B cell (primary cell): ENCODE measurements at regions of chr19 and their contacts with region 1.

Region 1: DNA sequence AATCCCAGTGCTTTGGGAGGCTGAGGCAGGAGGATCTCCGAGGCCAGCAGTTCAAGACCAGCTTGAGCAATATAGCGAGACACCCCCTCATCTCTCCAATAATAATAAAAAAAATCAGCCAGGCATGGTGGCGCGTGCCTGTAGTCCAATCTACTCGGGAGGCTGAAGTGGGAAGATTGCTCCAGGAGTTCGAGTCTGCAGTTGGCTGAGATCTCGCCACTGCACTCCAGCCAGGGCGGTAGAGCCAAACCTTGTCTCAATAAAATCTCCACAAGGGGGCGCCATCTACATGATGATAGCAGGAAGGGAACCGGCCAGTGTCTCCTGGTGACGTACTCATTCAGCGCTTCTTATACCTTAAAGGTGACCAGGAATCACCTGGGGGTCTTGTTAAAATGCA is 13.6 kb upstream of the C5AR1 start:
- DNase-seq: peak; percentile 86
- ATAC-seq: peak; percentile 80
- H3K4me3 ChIP-seq: no peak overlapping the region
- H3K4me3 Mint-ChIP-seq: no peak overlapping the region
- H3K27ac ChIP-seq: no peak overlapping the region
- H3K27ac Mint-ChIP-seq: no peak overlapping the region
- H3K4me1 ChIP-seq: peaks cover 4 to 18% of the 10 kb centered on the region in 2 donors
- H3K4me1 Mint-ChIP-seq: peaks cover 13% of the 10 kb centered on the region
- H3K27me3 ChIP-seq: peaks cover 0 to 6% (median 1%) of the 10 kb centered on the region in 4 experiments
- H3K27me3 Mint-ChIP-seq: no peaks in the 10 kb centered on the region
- CTCF ChIP-seq: peak; percentile 78

Region 2: DNA sequence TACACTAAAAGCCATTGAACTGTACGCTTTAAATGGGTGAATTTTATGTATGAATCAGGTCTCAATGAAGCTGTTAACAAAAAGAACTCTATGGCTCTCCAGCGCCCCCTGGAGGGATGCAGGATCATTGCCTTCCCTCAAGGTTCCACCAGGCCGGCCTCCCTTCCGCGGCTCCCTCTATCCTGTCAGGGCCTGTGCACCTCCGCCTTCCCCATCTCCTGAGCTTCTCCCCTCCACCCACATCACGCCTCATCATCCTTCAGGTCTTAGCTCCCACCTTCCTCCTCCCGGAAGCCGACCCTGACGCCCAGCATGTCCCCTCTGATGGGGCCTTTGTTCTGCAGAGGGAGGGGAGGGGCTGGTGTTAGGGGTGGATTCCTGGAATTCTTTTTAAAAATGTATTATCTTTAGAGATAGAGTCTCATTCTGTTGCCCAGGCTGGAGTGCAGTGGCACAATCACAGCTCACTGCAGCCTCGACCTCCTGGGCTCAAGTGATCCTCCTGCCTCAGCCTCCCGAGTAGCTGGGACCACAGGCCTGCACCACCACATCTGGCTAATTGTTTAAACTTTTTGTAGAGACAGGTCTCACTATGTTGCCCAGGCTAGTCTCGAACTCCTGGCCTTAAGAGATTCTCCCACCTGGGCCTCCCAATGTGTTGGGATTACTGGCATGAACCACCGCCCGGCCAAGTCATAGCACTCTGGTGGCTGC is 95.6 kb after region 1 on chr19:
- CTCF ChIA-PET with region 1: interaction called, 27 read pairs
- POLR2A ChIA-PET with region 1: no interaction called
- intact Hi-C with region 1: no loop called
- DNase-seq: peak; percentile 77
- ATAC-seq: peak; percentile 68
- H3K4me3 ChIP-seq: no peak overlapping the region
- H3K4me3 Mint-ChIP-seq: no peak overlapping the region
- H3K27ac ChIP-seq: no peak overlapping the region
- H3K27ac Mint-ChIP-seq: no peak overlapping the region
- H3K4me1 ChIP-seq: peaks cover 0 to 7% of the 10 kb centered on the region in 2 donors
- H3K4me1 Mint-ChIP-seq: peaks cover 7% of the 10 kb centered on the region
- H3K27me3 ChIP-seq: peaks cover 0 to 3% (median 0%) of the 10 kb centered on the region in 4 experiments
- H3K27me3 Mint-ChIP-seq: peaks cover 33% of the 10 kb centered on the region
- CTCF ChIP-seq: peak; percentile 93

Region 3: DNA sequence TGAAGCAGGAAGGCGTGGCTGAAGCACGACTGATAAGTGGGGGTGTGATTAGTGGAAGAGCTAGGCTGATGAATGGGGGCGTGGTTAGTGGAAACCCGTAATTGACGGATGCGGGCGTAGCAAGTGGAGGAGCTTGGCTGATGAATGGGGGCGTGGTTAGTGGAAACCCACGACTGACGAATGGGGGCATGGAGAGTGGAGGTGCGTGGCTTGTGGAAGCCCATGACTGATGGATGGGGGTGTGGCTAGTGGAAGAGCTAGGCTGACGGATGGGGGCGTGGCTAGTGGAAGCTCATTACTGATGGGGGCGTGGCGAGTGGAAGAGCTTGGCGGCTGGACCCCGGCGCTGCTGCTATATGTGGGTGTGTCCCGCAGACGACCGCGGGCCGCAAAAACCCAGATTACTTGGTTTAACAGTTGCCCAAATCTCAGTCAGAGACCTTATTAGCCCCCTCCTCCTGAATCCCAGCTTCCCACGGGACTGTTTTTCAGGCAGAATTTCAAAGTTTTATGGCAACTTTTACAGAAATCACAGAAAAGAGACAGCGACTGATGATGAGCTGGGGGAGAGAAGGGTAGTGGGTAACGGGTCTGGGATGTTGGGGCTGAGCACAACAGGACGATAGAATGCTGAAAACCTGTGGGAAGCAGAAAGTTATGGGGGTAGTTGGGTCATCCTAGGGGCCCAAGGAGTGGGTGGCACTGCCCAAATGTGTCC is 132.3 kb after region 1 on chr19:
- CTCF ChIA-PET with region 1: interaction called, 4 read pairs
- POLR2A ChIA-PET with region 1: no interaction called
- intact Hi-C with region 1: loop called (anchors 1 kb)
- DNase-seq: peak; percentile 71
- ATAC-seq: peak; percentile 35
- H3K4me3 ChIP-seq: no peak overlapping the region
- H3K4me3 Mint-ChIP-seq: no peak overlapping the region
- H3K27ac ChIP-seq: no peak overlapping the region
- H3K27ac Mint-ChIP-seq: no peak overlapping the region
- H3K4me1 ChIP-seq: peaks cover 22 to 31% of the 10 kb centered on the region in 2 donors
- H3K4me1 Mint-ChIP-seq: peaks cover 11% of the 10 kb centered on the region
- H3K27me3 ChIP-seq: peaks cover 0 to 95% (median 52%) of the 10 kb centered on the region in 4 experiments
- H3K27me3 Mint-ChIP-seq: peaks cover 45% of the 10 kb centered on the region
- CTCF ChIP-seq: no peak

Region 4: DNA sequence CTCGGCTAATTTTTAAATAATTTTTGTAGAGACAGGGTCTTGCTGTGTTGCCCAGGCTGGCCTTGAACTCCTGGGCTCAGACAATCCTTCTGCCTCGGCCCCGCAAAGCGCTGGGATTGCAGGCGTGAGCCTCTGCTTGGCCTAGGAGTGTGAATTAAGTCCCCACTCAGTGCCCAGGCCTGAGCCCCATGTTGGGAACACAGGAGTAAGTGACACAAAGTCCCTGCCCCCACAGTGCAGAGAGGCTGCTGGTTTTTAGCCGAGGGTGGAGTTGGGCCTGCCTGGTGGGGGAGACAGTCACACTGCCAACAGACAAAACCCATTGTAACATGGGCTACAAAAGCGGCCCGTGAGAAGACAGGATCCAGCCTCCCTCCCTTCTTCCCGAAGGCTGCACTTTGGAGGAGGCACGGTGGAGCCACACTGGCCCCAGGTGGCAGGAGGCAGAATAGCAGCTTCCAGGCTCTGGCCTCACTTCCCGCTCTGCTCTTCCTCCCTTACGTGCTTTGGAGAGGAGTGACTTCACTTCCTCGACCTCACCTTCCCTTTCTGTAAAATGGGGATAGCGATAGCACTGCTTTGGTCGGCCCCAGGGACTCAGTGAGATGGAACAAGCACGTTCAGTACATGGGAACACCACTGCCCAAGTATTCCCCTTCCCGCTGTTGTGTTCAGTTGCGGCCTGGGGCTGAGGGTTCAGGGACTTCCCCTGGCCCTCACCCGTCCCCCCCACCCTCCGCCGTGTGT is 402.0 kb after region 1 on chr19:
- CTCF ChIA-PET with region 1: no interaction called
- POLR2A ChIA-PET with region 1: no interaction called
- intact Hi-C with region 1: loop called (anchors 1 kb)
- DNase-seq: peak; percentile 70
- ATAC-seq: peak; percentile 60
- H3K4me3 ChIP-seq: no peak overlapping the region
- H3K4me3 Mint-ChIP-seq: no peak overlapping the region
- H3K27ac ChIP-seq: no peak overlapping the region
- H3K27ac Mint-ChIP-seq: no peak overlapping the region
- H3K4me1 ChIP-seq: no peaks in the 10 kb centered on the region
- H3K4me1 Mint-ChIP-seq: no peaks in the 10 kb centered on the region
- H3K27me3 ChIP-seq: no peaks in the 10 kb centered on the region
- H3K27me3 Mint-ChIP-seq: no peaks in the 10 kb centered on the region
- CTCF ChIP-seq: peak; percentile 84